HEK293 (cell line): ENCODE measurements at regions of chr5 and their contacts with region 1.

Region 1: DNA sequence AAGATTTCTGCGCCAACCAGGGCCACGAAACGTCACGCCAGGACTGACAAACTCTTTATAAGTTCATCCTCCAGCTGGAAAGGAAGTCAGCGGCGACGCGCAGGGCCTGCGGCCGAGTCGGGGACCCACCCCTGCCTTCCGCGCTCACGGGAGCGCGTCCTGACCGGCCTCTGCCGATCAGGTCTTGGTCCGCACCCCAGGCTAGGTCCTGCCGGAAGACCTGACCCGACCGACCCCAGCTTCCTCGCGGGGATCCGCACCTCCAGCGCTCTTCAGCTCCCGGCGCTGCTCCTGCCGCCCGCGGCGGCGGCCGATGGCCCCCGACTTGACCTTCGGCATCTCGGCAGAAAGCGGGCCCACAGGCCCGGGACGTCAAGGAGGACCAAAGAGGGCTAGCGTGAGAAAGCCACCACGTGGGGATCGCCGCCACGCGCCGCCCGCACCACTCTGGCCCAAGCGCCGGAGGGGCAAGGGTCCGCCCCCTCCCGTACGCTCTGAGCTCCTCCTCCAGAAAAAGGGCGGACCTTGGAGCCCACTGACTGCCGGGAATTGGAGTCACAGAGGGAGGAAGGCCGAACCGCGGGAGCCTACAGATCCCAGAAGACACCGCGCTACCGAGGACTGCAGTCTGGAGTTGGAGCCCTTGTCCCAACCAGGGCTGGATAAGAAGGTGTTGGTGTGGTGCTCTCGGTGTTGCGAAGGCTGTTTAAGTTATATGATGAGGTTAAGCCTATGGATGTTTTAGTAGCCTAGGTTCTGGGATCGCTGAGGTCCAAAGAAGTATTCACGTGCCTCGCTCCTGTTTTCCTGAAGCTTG is at the start of gene DIMT1:
- H3K4me3 ChIP-seq: peak within 1 kb of the TSS; percentile 98
- H3K27ac ChIP-seq: peak within 1 kb of the TSS; percentile 79
- H3K4me1 ChIP-seq: no peaks in the 10 kb centered on the region
- CTCF ChIP-seq: peak; percentile 34; the same call in 1 of the 2 replicates

Region 2: GRCh38 chr5:62305715-62306322 is 97.8 kb before region 1 on chr5 and contains the start of gene KIF2A:
- CTCF ChIA-PET with region 1: no interaction called
- POLR2A ChIA-PET with region 1: interaction called, 13 read pairs
- H3K4me3 ChIP-seq: peak within 1 kb of the TSS; percentile 93
- H3K27ac ChIP-seq: peak within 1 kb of the TSS; percentile 93
- H3K4me1 ChIP-seq: 0 out of 2 replicates have a peak, but pooled peaks cover 1% of the 10 kb centered on the region
- CTCF ChIP-seq: peak; percentile 88

Region 3: GRCh38 chr5:62362701-62363100 is 40.9 kb before region 1 on chr5:
- CTCF ChIA-PET with region 1: no interaction called
- POLR2A ChIA-PET with region 1: no interaction called
- H3K4me3 ChIP-seq: no peak overlapping the region
- H3K27ac ChIP-seq: no peak overlapping the region
- H3K4me1 ChIP-seq: no peaks in the 10 kb centered on the region
- CTCF ChIP-seq: no peak

Region 4: GRCh38 chr5:62421414-62421813 is 17.8 kb after region 1 on chr5:
- CTCF ChIA-PET with region 1: no interaction called
- POLR2A ChIA-PET with region 1: interaction called, 10 read pairs
- H3K4me3 ChIP-seq: no peak overlapping the region
- H3K27ac ChIP-seq: no peak overlapping the region
- H3K4me1 ChIP-seq: peaks cover 2% of the 10 kb centered on the region; the same call in 1 of the 2 replicates
- CTCF ChIP-seq: no peak